ENCODE measurements at regions of chr13 and their contacts with region 1.

Region 1: GRCh38 chr13:46603165-46603603 is 50.2 kb downstream of the LRCH1 start:
- DNase-seq: peak; percentile 23
- H3K4me3 ChIP-seq: no peak overlapping the region
- H3K27ac ChIP-seq: no peak overlapping the region
- H3K4me1 ChIP-seq: peaks cover 21% of the 10 kb centered on the region
- H3K27me3 ChIP-seq: no peaks in the 10 kb centered on the region
- CTCF ChIP-seq: peak; percentile 12 to 14
- POLR2A ChIP-seq: no peak

Region 2: GRCh38 chr13:46295491-46296114 is 307.6 kb before region 1 on chr13:
- CTCF ChIA-PET with region 1: no interaction called
- POLR2A ChIA-PET with region 1: no interaction called
- dilution Hi-C with region 1: no loop called
- intact Hi-C with region 1: no loop called
- DNase-seq: peak; percentile 48
- H3K4me3 ChIP-seq: no peak overlapping the region
- H3K27ac ChIP-seq: no peak overlapping the region
- H3K4me1 ChIP-seq: peaks cover 29% of the 10 kb centered on the region
- H3K27me3 ChIP-seq: no peaks in the 10 kb centered on the region
- CTCF ChIP-seq: no peak
- POLR2A ChIP-seq: no peak

Region 3: DNA sequence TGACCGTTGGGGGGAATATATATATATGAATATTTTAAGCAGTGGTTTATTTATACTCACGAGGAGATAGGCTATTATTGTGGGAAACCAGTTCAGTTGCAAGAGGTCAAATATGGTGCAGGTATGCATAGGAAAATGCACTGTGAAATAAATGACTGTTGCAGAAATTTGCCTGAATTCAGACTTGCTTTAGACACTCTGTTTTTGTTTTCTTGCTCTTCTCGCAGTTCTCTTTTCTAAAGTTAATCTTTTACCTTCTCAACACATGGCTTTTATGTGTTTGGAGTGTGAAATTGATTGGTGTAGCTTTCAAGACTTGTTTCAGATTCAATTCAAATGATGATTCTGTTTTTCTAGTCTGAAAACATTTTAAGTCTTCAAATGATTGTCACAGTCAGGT is 59.5 kb after region 1 on chr13:
- CTCF ChIA-PET with region 1: no interaction called
- POLR2A ChIA-PET with region 1: no interaction called
- dilution Hi-C with region 1: no loop called
- intact Hi-C with region 1: loop called (anchors 2 kb)
- DNase-seq: no peak
- H3K4me3 ChIP-seq: no peak overlapping the region
- H3K27ac ChIP-seq: peak overlapping the region; percentile 46
- H3K4me1 ChIP-seq: peaks cover 37% of the 10 kb centered on the region
- H3K27me3 ChIP-seq: no peaks in the 10 kb centered on the region
- CTCF ChIP-seq: no peak
- POLR2A ChIP-seq: no peak

Measured in endothelial cell of umbilical vein (primary cell).